Heart left ventricle (tissue), 16 donors: ENCODE measurements at regions of chr2 and their contacts with region 1.

Region 1: DNA sequence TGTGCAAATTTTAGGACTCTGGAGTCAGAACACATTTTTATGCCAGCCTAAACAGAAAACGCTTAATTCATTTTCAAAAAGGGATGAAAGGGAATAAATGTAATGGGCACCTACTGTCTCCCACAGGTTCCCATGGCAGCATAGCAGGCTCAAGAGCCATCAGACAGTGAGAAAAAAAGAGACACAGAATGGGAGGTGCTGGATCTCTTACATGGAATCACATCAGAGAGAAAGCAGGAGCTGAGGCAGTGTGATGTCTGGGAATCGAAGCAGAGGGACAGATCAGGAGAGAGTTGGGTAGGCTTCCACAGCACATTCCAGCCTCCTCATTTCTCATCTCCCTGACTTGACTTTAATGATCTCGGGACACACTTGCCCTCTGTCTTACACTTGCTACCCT is 684.3 kb downstream of the KCNJ3 start:
- DNase-seq: no peak
- ATAC-seq: no peak
- H3K4me3 ChIP-seq: no peak overlapping the region
- H3K27ac ChIP-seq: no peak overlapping the region
- H3K4me1 ChIP-seq: no peaks in the 10 kb centered on the region
- H3K27me3 ChIP-seq: no peaks in the 10 kb centered on the region
- CTCF ChIP-seq: no peak
- POLR2A ChIP-seq: no peak

Region 2: GRCh38 chr2:154924531-154924930 is 458.2 kb before region 1 on chr2:
- intact Hi-C with region 1: no loop called
- DNase-seq: no peak
- ATAC-seq: no peak
- H3K4me3 ChIP-seq: no peak overlapping the region
- H3K27ac ChIP-seq: no peak overlapping the region
- H3K4me1 ChIP-seq: no peaks in the 10 kb centered on the region
- H3K27me3 ChIP-seq: no peaks in the 10 kb centered on the region
- CTCF ChIP-seq: no peak
- POLR2A ChIP-seq: no peak

Region 3: GRCh38 chr2:155755481-155755880 is 372.7 kb after region 1 on chr2:
- intact Hi-C with region 1: no loop called
- DNase-seq: no peak
- ATAC-seq: no peak
- H3K4me3 ChIP-seq: no peak overlapping the region
- H3K27ac ChIP-seq: no peak overlapping the region
- H3K4me1 ChIP-seq: no peaks in the 10 kb centered on the region
- H3K27me3 ChIP-seq: no peaks in the 10 kb centered on the region
- CTCF ChIP-seq: no peak
- POLR2A ChIP-seq: no peak

Region 4: GRCh38 chr2:156147594-156148330 is 765.0 kb after region 1 on chr2:
- intact Hi-C with region 1: no loop called
- DNase-seq: no peak
- ATAC-seq: no peak
- H3K4me3 ChIP-seq: no peak overlapping the region
- H3K27ac ChIP-seq: no peak overlapping the region
- H3K4me1 ChIP-seq: no peaks in the 10 kb centered on the region
- H3K27me3 ChIP-seq: no peaks in the 10 kb centered on the region
- CTCF ChIP-seq: no peak
- POLR2A ChIP-seq: no peak

Region 5: DNA sequence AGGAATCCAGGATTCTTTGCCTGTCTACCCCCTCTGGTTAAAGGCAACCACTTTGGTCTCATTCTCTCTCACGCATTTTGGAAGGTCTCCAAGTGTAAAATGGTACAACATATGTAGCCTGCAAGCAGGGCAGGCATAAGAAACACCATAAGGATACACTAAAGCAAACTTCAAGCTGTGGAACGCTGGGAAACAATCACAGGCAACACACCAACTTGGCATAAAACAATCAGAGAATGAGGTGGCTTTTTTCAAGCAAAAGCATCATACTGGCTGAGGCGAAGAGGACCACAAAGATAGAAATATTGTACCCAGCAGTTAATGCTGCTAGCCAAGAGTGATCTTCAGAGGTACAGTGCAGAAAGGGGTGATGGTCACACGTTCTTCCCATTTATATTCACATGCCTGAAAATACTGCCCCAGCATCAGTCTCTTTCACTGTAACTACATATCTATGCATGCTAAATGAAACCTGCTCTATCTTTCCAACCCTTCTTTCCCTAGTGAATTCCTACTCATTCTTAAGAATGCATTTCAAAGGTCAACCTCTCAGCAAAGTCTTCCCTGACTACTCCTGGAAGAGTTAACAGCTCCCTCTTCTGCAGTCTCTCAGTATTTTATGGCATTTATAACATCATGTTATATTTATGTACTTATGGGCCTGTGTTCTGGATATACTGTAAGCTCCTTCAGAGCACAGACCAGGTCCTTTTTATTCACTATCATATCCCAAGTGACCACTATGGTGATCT is 1802.9 kb after region 1 on chr2:
- intact Hi-C with region 1: loop called in 5 of 10 experiments (anchors 5 to 10 kb)
- DNase-seq: no peak
- ATAC-seq: no peak
- H3K4me3 ChIP-seq: no peak overlapping the region
- H3K27ac ChIP-seq: no peak overlapping the region
- H3K4me1 ChIP-seq: peaks cover 0 to 23% (median 0%) of the 10 kb centered on the region in 12 donors
- H3K27me3 ChIP-seq: no peaks in the 10 kb centered on the region
- CTCF ChIP-seq: no peak
- POLR2A ChIP-seq: no peak